ENCODE measurements at regions of chr20 and their contacts with region 1.

Region 1: DNA sequence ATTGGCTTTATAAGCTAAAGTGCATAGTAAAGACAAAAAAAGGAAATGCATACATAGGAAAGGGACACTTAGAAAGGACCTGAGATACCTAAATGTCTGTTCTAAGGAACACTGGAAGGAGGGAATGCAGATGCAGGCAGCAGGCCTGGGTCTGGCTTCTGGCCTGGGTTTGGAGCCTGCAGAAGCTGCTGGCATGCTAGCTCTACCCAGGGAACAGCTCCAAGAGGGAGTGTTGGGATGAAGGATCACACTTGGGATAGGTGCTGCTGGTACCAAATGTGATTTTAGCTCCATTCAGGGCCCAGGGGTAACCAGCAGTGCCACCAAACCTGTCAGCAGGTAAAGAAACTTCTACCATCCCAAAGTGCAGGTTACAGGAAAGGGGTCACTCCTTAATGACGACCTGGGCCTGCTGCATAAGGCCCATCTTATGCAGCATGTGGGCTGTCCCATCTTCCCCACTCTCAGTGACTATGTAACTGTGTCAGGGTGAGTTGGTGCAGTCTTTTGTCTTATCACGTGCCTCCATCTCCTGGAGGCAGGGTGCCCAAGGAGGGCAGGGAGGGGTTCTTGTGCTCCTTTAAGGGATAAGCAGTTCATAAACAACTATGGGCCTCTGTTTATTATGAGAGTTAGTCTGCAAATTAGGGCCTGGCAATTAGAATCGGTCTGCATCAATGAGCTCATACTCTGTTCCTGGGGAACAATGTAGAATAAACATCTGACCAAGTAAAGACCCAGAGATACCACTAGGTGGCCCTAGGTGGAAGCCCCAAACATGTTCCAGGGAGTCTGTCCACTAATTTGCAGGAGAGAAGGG is 26.9 kb downstream of the DDX27 start:
- DNase-seq: no peak
- H3K4me3 ChIP-seq: no peak overlapping the region
- H3K27ac ChIP-seq: 0 out of 2 replicates have a peak overlapping the region, but pooled peaks have one; percentile 2
- H3K4me1 ChIP-seq: no peaks in the 10 kb centered on the region
- H3K27me3 ChIP-seq: no peaks in the 10 kb centered on the region
- CTCF ChIP-seq: peak; percentile 4 to 76 (median 64)
- EP300 ChIP-seq: no peak
- POLR2A ChIP-seq: peak; percentile 3 to 10; a peak in 1 of 3 replicates
- RAD21 ChIP-seq: peak; percentile 43 to 61

Region 2: GRCh38 chr20:48866502-48867335 is 379.4 kb before region 1 on chr20:
- CTCF ChIA-PET with region 1: no interaction called
- POLR2A ChIA-PET with region 1: no interaction called
- DNase-seq: no peak
- H3K4me3 ChIP-seq: no peak overlapping the region
- H3K27ac ChIP-seq: no peak overlapping the region
- H3K4me1 ChIP-seq: no peaks in the 10 kb centered on the region
- H3K27me3 ChIP-seq: no peaks in the 10 kb centered on the region
- CTCF ChIP-seq: no peak
- EP300 ChIP-seq: no peak
- POLR2A ChIP-seq: no peak
- RAD21 ChIP-seq: no peak

Region 3: GRCh38 chr20:49219089-49219923 is 26.8 kb before region 1 on chr20 and contains the start of gene DDX27:
- CTCF ChIA-PET with region 1: interaction called, 15 read pairs
- POLR2A ChIA-PET with region 1: interaction called, 6 read pairs
- DNase-seq: peak; percentile 97 to 99
- H3K4me3 ChIP-seq: peak within 1 kb of the TSS; percentile 78 to 88 (median 85)
- H3K27ac ChIP-seq: peak within 1 kb of the TSS; percentile 74
- H3K4me1 ChIP-seq: peaks cover 0 to 5% (median 3%) of the 10 kb centered on the region in 4 experiments; a peak in 3 of 7 replicates
- H3K27me3 ChIP-seq: no peaks in the 10 kb centered on the region
- CTCF ChIP-seq: no peak
- EP300 ChIP-seq: peak in 1 of 2 experiments; percentile 3; a peak in 1 of 3 replicates
- POLR2A ChIP-seq: peak; percentile 71 to 94
- RAD21 ChIP-seq: no peak
- total RNA-seq, gene DDX27: 49.3 and 51.0 TPM in 2 replicates

Region 4: GRCh38 chr20:49256261-49256660 is 10.1 kb after region 1 on chr20:
- CTCF ChIA-PET with region 1: interaction called, 41 read pairs
- POLR2A ChIA-PET with region 1: interaction called, 7 read pairs
- DNase-seq: no peak
- H3K4me3 ChIP-seq: no peak overlapping the region
- H3K27ac ChIP-seq: no peak overlapping the region
- H3K4me1 ChIP-seq: no peaks in the 10 kb centered on the region
- H3K27me3 ChIP-seq: no peaks in the 10 kb centered on the region
- CTCF ChIP-seq: no peak
- EP300 ChIP-seq: no peak
- POLR2A ChIP-seq: no peak
- RAD21 ChIP-seq: no peak

Region 5: GRCh38 chr20:49278036-49278817 is 32.1 kb after region 1 on chr20 and contains the start of gene ZNFX1:
- CTCF ChIA-PET with region 1: interaction called, 13 read pairs
- POLR2A ChIA-PET with region 1: interaction called, 54 read pairs
- DNase-seq: peak; percentile 97 to 98
- H3K4me3 ChIP-seq: peak within 1 kb of the TSS; percentile 73 to 97 (median 92)
- H3K27ac ChIP-seq: peak within 1 kb of the TSS; percentile 94
- H3K4me1 ChIP-seq: peaks cover 0 to 8% (median 5%) of the 10 kb centered on the region in 4 experiments; a peak in 3 of 7 replicates
- H3K27me3 ChIP-seq: peaks cover 0 to 1% (median 0%) of the 10 kb centered on the region in 4 experiments; a peak in 1 of 7 replicates
- CTCF ChIP-seq: 0 out of 4 replicates have a peak, but pooled peaks of 1 of the 3 experiments have one; percentile 5
- EP300 ChIP-seq: no peak
- POLR2A ChIP-seq: peak; percentile 100
- RAD21 ChIP-seq: no peak
- total RNA-seq, gene ZNFX1: 11.3 and 13.0 TPM in 2 replicates

Region 6: GRCh38 chr20:49323622-49324238 is 77.6 kb after region 1 on chr20:
- CTCF ChIA-PET with region 1: interaction called, 33 read pairs
- POLR2A ChIA-PET with region 1: interaction called, 13 read pairs
- DNase-seq: no peak
- H3K4me3 ChIP-seq: no peak overlapping the region
- H3K27ac ChIP-seq: no peak overlapping the region
- H3K4me1 ChIP-seq: peaks cover 0 to 12% (median 2%) of the 10 kb centered on the region in 4 experiments; a peak in 5 of 7 replicates
- H3K27me3 ChIP-seq: peaks cover 2 to 12% (median 11%) of the 10 kb centered on the region in 4 experiments
- CTCF ChIP-seq: peak in 2 of 3 experiments; percentile 35 to 37; a peak in 3 of 4 replicates
- EP300 ChIP-seq: no peak
- POLR2A ChIP-seq: no peak
- RAD21 ChIP-seq: peak; percentile 46 to 58

Region 7: GRCh38 chr20:49372095-49372726 is 126.1 kb after region 1 on chr20:
- CTCF ChIA-PET with region 1: no interaction called
- POLR2A ChIA-PET with region 1: no interaction called
- DNase-seq: no peak
- H3K4me3 ChIP-seq: no peak overlapping the region
- H3K27ac ChIP-seq: no peak overlapping the region
- H3K4me1 ChIP-seq: no peaks in the 10 kb centered on the region; a peak in 1 of 7 replicates
- H3K27me3 ChIP-seq: no peaks in the 10 kb centered on the region
- CTCF ChIP-seq: no peak
- EP300 ChIP-seq: no peak
- POLR2A ChIP-seq: no peak
- RAD21 ChIP-seq: no peak